Activated naive CD4-positive, alpha-beta T cell treated with anti-CD3 and anti-CD28 coated beads for 36 hours (primary cell): ENCODE measurements at regions of chr11 and their contacts with region 1.

Region 1: GRCh38 chr11:35617687-35618496 is at the start of gene FJX1:
- DNase-seq: peak; percentile 38
- H3K4me3 Mint-ChIP-seq: peak within 1 kb of the TSS; percentile 70
- H3K27ac Mint-ChIP-seq: no peak within 1 kb of the TSS
- H3K4me1 Mint-ChIP-seq: peaks cover 12% of the 10 kb centered on the region
- H3K27me3 Mint-ChIP-seq: peaks cover 48% of the 10 kb centered on the region
- total RNA-seq, gene FJX1: 0.77 to 0.98 TPM

Region 2: DNA sequence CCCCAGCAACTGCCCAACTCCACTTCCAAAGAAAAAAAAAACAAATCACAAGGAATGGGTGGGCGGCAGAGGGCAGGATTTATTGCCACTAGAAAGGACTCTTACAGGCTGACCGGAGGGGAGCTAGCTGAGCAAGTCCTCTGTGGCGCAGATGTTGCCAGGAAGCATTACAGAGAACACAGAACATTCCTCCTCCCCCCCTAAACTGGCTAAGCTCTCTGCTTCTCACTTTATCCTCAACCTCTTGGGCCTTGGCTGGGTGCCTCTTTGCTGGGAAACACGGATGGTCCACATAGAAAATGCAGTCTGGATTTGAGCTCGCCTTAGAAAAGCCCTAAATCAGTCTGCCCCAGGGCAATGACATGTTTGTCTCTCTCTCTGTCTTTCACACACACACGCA is 12.2 kb before region 1 on chr11:
- CTCF ChIA-PET with region 1: interaction called, 15 read pairs
- intact Hi-C with region 1: no loop called
- DNase-seq: no peak
- H3K4me3 Mint-ChIP-seq: no peak overlapping the region
- H3K27ac Mint-ChIP-seq: no peak overlapping the region
- H3K4me1 Mint-ChIP-seq: no peaks in the 10 kb centered on the region
- H3K27me3 Mint-ChIP-seq: peaks cover 31% of the 10 kb centered on the region

Region 3: DNA sequence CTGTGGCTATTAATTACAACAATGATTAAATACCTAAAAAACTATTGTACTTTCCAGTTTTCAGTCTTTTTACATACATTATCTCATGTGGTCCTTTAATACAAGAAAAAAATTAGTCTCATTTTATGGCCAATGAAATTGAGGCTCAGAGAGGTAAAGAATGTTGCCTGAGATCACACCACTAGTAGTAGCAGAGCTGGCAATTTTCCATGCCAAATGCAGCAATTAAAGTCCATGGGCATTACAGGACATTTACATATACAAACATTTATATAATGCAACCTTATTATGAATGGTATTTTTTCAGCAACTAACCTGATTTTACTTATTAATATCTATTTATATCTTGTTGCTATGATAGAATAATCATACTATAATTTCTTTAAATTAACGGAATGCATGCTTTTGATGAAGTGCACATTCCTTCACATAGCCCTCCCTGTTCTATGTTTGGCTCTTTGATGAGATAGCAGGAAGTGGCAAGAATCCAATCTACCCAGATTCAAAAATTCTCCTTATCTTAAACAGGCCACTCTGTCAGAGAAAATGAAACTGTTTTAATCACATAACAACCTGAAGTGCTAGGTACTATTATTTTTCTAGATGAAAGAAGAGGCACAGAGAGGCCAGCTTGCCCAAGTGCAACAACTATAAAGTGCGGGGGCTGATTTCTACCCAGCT is 205.1 kb after region 1 on chr11:
- CTCF ChIA-PET with region 1: interaction called, 21 read pairs
- intact Hi-C with region 1: loop called (anchors 1 kb)
- DNase-seq: no peak
- H3K4me3 Mint-ChIP-seq: no peak overlapping the region
- H3K27ac Mint-ChIP-seq: no peak overlapping the region
- H3K4me1 Mint-ChIP-seq: peaks cover 11% of the 10 kb centered on the region
- H3K27me3 Mint-ChIP-seq: no peaks in the 10 kb centered on the region

Region 4: DNA sequence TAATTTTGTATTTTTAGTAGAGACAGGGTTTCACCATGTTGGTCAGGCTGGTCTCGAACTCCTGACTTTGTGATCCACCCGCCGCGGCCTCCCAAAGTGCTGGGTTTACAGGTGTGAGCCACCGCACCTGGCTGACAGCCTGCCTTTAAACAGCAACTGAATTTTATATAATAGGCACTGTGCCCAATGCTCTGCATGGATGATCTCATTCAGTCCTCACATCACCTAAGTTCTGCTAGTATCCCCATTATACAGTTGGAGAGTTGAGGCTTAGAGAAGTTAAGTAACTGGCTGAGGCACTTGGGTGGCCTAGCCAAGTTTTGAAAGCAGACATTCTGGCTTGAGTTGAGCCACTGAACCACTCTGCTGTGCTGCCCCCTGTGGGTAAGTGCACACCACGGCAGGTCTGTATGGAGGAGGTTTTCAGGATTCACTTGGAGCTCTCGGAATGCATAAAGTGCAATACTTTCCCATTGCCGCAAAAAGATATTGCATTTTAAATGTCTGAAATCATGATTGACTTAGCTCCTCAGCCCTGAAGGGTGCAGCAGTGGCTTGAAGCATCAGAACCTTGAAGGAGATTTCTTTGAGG is 438.4 kb after region 1 on chr11:
- CTCF ChIA-PET with region 1: no interaction called
- intact Hi-C with region 1: loop called (anchors 1 kb)
- DNase-seq: no peak
- H3K4me3 Mint-ChIP-seq: no peak overlapping the region
- H3K27ac Mint-ChIP-seq: no peak overlapping the region
- H3K4me1 Mint-ChIP-seq: no peaks in the 10 kb centered on the region
- H3K27me3 Mint-ChIP-seq: peaks cover 6% of the 10 kb centered on the region

Region 5: GRCh38 chr11:36149538-36150242 is 531.8 kb after region 1 on chr11:
- CTCF ChIA-PET with region 1: no interaction called
- intact Hi-C with region 1: loop called (anchors 1 kb)
- DNase-seq: peak; percentile 68
- H3K4me3 Mint-ChIP-seq: no peak overlapping the region
- H3K27ac Mint-ChIP-seq: no peak overlapping the region
- H3K4me1 Mint-ChIP-seq: peaks cover 13% of the 10 kb centered on the region
- H3K27me3 Mint-ChIP-seq: peaks cover 20% of the 10 kb centered on the region

Region 6: GRCh38 chr11:36265793-36266628 is 648.1 kb after region 1 on chr11:
- CTCF ChIA-PET with region 1: interaction called, 37 read pairs
- intact Hi-C with region 1: loop called (anchors 1 kb)
- DNase-seq: peak; percentile 74
- H3K4me3 Mint-ChIP-seq: no peak overlapping the region
- H3K27ac Mint-ChIP-seq: no peak overlapping the region
- H3K4me1 Mint-ChIP-seq: no peaks in the 10 kb centered on the region
- H3K27me3 Mint-ChIP-seq: peaks cover 1% of the 10 kb centered on the region